ENCODE measurements at regions of chr2 and their contacts with region 1.

Region 1: DNA sequence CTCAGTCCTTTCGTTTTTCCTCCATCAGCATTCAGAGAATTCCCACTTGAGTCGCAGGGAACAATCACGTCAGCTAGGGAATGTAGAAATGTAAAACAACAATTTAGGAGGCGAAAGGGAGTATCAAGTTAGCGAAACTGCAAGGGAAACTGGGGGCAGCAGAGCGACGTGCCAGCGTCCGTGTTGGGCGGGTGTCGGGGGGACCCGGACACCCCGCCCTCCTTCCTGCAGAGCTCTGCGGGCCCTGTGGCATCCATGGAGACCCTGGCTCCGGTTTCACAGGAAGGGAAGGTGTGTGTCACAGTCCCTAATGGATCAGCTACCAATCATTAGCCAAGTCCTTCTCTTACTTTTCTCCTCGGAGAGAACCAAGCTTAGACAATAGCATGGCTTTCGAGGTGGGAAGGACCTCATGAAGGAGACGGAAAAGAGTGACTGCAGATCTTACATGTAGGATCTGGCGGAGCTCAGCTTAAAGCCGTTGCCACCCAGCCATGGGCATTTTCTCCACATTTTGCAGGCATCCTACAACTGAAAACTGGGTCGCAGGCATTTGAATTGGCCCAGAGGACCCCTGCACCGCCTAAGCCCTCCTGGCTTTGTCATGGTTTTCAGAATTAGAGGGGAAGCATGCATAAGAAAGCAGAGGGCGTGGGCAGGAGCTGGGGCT is 33.7 kb downstream of the SOX11 start:
- DNase-seq: peak; percentile 79
- ATAC-seq: peak; percentile 92
- H3K4me3 Mint-ChIP-seq: peak overlapping the region; percentile 68
- H3K27ac Mint-ChIP-seq: peak overlapping the region; percentile 100
- H3K4me1 Mint-ChIP-seq: peaks cover 49% of the 10 kb centered on the region
- H3K27me3 Mint-ChIP-seq: no peaks in the 10 kb centered on the region
- CTCF ChIP-seq: no peak

Region 2: DNA sequence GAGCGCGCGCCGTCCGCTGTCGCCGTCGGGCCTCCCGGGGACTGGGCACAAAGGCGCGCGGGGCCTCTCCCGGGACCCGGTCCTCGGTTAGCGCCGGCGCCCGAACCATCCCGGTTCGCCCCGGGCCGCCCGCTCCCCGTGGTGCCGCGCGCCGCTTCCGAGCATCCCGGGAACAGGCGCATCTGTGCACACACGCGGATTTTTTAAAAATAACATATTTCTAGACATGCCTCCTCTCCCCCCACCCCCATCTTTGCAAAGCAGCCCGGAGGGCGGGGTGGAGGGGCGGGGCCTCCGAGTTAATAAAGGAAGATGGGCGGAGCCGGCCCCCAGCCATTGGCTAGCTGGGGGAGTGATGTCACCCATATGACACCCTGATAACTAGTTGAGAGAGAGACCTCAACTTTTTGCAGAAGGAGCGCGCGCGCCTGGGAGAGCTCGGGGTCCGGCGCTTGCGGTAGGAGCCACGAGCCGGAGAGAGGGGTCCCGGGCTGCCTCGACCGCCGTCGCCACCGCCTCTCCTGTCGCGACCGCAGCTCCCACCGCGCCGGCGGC is 33.9 kb before region 1 on chr2 and contains the start of gene SOX11:
- CTCF ChIA-PET with region 1: interaction called, 4 read pairs
- POLR2A ChIA-PET with region 1: interaction called, 26 read pairs
- DNase-seq: peak; percentile 82
- ATAC-seq: peak; percentile 44
- H3K4me3 Mint-ChIP-seq: peak within 1 kb of the TSS; percentile 92
- H3K27ac Mint-ChIP-seq: no peak within 1 kb of the TSS; the same call in 1 of the 2 replicates
- H3K4me1 Mint-ChIP-seq: peaks cover 6% of the 10 kb centered on the region
- H3K27me3 Mint-ChIP-seq: peaks cover 19% of the 10 kb centered on the region
- CTCF ChIP-seq: no peak
- total RNA-seq, gene SOX11: 22.5 to 24.8 TPM (median 24.0 TPM) in 3 replicates